RWPE1 (cell line): ENCODE measurements at regions of chr18 and their contacts with region 1.

Region 1: GRCh38 chr18:63741769-63742168 is 33.4 kb upstream of the SERPINB7 start:
- DNase-seq: peak; percentile 11
- H3K27ac ChIP-seq: no peak overlapping the region
- CTCF ChIP-seq: peak; percentile 68

Region 2: DNA sequence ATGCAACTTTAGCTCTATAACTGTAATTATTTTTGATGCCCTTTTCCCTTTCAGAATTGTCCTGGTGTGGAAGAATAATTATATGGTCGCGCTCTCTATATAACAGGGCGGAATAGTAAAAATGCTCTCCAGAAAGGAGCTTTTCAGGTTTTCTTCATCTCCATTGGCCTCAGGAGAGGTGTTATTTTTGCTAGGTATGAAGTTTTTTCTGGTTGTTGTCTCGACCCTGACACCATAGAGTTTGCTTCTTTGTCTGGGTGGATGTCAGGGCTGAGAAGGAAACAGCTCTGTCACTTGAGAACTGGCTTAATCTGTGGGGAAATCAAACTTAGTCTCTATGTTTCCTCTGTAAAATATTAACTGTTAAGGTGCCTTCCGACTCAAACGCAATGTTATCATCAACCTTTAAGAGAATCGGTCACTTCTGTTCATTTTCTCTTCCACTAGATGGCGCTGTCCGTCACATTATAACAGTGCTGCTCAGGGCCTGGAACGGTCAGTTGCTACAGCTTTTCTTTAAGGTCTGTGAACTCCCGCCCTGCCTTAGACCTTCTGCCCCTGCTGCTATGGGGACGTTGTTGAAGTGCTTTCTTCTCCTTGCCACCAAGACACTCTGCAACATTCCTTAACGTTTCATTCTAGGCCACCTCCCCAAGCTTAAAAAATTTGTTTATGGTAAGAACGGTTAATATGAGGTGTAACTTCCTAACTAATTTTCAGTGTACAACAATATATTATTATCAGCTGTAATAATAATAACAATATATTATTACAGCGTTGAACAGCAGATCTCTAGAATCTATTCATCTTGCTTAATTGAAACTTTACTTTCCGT is 223.4 kb before region 1 on chr18:
- CTCF ChIA-PET with region 1: interaction called, 35 read pairs
- POLR2A ChIA-PET with region 1: no interaction called
- DNase-seq: peak; percentile 50
- H3K27ac ChIP-seq: no peak overlapping the region
- CTCF ChIP-seq: peak; percentile 71

Region 3: GRCh38 chr18:63578357-63578958 is 163.3 kb before region 1 on chr18:
- CTCF ChIA-PET with region 1: interaction called, 12 read pairs
- POLR2A ChIA-PET with region 1: no interaction called
- DNase-seq: no peak
- H3K27ac ChIP-seq: no peak overlapping the region
- CTCF ChIP-seq: peak; percentile 76

Region 4: GRCh38 chr18:63617049-63617914 is 124.5 kb before region 1 on chr18:
- CTCF ChIA-PET with region 1: no interaction called
- POLR2A ChIA-PET with region 1: no interaction called
- DNase-seq: no peak
- H3K27ac ChIP-seq: no peak overlapping the region
- CTCF ChIP-seq: no peak

Region 5: GRCh38 chr18:63730773-63731172 is 11.0 kb before region 1 on chr18:
- CTCF ChIA-PET with region 1: interaction called, 12 read pairs
- POLR2A ChIA-PET with region 1: no interaction called
- DNase-seq: peak; percentile 32
- H3K27ac ChIP-seq: peak overlapping the region; percentile 78
- CTCF ChIP-seq: no peak